Mammary epithelial cell (primary cell): ENCODE measurements at regions of chr19 and their contacts with region 1.

Region 1: DNA sequence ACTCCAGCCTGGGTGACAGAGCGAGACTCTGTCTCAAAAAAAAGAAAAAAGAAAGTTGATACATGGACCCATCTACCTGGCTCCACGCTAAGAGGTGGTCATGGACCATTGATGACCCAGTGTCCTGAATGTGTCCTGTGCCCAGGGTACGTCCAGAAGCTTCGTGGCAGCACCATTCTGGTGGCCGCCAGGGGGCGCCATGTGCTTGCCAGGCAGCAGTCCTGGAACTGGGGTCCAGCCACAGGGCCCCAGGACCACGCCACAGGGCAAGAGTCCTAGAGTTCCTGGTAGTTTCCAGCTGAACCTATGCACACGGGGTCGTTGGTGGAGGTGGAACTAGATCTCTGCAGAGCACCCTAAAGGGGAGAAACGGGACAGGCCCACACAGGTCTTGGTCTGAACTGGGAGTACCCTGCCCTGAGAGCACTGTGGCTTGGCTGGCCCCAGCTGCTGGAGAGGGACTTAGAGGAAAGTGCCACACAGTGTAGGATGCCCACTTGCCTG is 19.9 kb upstream of the FBXO27 start:
- DNase-seq: peak; percentile 33
- H3K4me3 ChIP-seq: no peak overlapping the region
- H3K27ac ChIP-seq: no peak overlapping the region
- H3K4me1 ChIP-seq: no peaks in the 10 kb centered on the region
- H3K27me3 ChIP-seq: no peaks in the 10 kb centered on the region
- CTCF ChIP-seq: peak; percentile 79 to 86

Region 2: GRCh38 chr19:38989066-38989605 is 63.2 kb before region 1 on chr19:
- CTCF ChIA-PET with region 1: no interaction called
- dilution Hi-C with region 1: loop called (anchors 5 kb)
- in situ Hi-C with region 1: no loop called
- intact Hi-C with region 1: no loop called
- DNase-seq: no peak
- H3K4me3 ChIP-seq: no peak overlapping the region
- H3K27ac ChIP-seq: no peak overlapping the region
- H3K4me1 ChIP-seq: peaks cover 25% of the 10 kb centered on the region
- H3K27me3 ChIP-seq: no peaks in the 10 kb centered on the region
- CTCF ChIP-seq: no peak

Region 3: DNA sequence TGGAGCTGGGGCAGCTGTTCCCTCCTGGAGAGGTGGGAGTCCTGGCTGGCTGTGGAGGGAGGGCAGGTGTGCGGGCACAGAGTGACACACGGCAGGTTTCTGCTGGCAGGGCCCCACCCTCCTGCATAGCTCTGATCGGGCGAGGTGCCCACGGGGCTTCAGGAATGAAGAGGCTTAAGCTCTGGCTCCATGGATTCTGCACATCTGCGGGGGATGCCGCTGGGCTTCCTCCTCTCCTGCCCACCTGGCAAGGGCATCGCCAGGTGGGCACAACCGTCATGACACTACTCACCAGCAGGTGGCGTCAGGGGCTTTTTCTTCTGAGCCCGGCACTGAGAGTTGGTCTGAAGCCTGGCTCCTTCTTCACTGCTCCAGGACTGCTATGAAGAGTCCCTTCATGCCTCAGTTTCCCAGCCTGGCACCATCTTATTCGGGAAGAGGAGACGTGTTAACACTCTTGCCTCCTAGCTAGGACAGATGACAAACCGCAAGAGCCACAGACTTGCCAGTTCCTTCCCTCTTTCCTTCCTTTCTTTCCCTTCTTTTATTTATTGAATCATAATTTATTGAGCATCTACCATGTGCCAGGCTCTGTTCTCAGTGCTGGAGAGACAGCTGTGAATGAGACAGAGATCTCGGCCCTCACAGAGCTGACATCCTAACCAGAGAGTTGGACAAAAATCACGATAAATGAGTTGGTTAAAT is 58.1 kb after region 1 on chr19:
- CTCF ChIA-PET with region 1: no interaction called
- dilution Hi-C with region 1: no loop called
- in situ Hi-C with region 1: no loop called
- intact Hi-C with region 1: loop called (anchors 1 kb)
- DNase-seq: no peak
- H3K4me3 ChIP-seq: no peak overlapping the region
- H3K27ac ChIP-seq: no peak overlapping the region
- H3K4me1 ChIP-seq: peaks cover 15% of the 10 kb centered on the region
- H3K27me3 ChIP-seq: no peaks in the 10 kb centered on the region
- CTCF ChIP-seq: peak; percentile 70 to 85

Region 4: DNA sequence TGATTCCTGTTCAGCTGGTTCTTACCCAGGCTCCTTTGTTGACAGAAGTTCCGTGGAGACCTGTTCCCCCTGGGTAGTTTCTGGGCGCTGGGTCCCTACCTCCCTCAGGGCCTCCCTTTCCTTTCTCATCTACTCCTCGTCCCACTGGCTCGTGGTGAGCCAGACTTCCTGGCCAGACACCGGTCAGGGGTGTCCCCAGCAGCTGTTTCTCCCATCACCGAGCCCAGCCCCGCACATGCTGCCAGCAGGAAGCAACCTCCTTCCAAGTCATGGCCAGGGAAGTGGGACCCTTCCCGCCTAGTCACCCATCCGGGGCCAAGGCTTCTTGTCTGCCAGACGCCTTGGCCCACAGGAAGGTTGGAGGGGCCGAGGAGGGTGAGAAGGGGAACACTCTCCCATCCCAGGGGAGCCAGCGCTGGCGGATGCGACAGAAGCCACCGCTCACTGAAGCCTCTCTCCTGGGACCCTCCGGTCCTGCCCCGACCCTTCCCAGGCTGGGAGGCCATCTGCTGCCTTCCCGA is 79.0 kb after region 1 on chr19:
- CTCF ChIA-PET with region 1: no interaction called
- dilution Hi-C with region 1: no loop called
- in situ Hi-C with region 1: no loop called
- intact Hi-C with region 1: no loop called
- DNase-seq: no peak
- H3K4me3 ChIP-seq: no peak overlapping the region
- H3K27ac ChIP-seq: no peak overlapping the region
- H3K4me1 ChIP-seq: peaks cover 25% of the 10 kb centered on the region
- H3K27me3 ChIP-seq: no peaks in the 10 kb centered on the region
- CTCF ChIP-seq: no peak

Region 5: DNA sequence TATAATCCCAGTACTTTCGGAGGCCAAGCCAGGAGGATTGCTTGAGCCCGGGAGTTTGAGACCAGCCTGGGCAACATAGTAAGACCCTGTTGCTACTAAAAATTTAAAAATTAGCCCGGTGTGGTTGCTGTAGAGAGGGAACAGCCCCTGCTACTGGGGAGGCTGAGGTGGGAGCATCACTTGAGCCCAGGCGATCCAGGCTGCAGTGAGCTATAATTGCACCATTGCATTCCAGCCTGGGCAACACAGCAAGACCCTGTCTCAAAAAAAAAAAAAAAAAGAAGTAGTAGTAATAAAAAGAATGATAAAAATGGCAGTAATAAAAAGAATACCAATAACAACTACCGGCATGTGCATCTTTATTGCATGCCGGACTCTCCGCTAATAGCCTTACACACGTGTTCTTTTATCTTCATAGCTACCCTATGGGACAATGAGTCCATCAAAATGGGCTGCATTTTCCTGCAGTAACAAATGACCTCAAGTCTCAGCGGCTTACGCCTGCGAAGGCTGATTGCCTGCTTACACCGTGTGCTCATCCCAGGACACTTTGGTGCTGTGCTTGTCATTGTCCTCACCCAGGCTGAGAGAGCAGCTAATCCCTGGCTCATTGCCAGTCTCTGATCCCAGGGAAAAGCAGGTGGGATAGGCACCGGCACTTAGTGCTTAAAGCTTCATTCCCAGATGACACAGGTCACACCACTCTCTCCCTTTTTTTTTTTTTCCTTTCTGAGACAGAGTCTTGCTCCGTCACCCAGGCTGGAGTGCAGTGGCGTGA is 166.1 kb after region 1 on chr19:
- CTCF ChIA-PET with region 1: no interaction called
- dilution Hi-C with region 1: loop called (anchors 5 kb)
- in situ Hi-C with region 1: no loop called
- intact Hi-C with region 1: no loop called
- DNase-seq: no peak
- H3K4me3 ChIP-seq: no peak overlapping the region
- H3K27ac ChIP-seq: no peak overlapping the region
- H3K4me1 ChIP-seq: no peaks in the 10 kb centered on the region
- H3K27me3 ChIP-seq: no peaks in the 10 kb centered on the region
- CTCF ChIP-seq: no peak